ENCODE measurements at regions of chr3 and their contacts with region 1.

Region 1: DNA sequence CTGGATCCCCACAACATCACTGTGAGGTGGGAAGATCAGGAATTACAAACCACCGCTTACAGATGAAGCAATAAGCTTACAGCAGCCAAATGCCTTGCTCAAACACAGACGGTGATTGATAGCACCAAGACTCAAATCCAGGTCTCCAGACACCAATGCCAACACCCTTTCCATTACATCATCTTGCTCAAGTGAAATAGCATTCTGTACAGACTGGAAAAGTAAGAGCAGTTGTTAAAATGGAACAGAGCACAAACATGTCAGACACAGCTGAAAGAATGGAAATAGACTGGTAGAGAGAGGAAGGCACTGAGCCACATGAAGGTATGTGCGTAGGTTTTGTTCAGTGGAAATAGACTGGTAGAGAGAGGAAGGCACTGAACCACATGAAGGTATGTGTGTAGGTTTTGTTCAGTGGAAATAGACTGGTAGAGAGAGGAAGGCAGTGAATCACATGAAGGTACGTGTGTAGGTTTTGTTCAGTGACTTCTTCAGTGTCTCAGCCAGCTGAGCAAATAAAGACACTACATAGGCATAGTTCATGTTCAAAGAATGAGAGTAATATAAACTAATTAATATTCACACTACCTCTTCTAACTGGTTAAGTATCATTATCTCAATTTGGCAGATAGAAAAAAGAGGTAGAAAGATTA is 15.6 kb downstream of the CLDN1 start:
- DNase-seq: peak in 1 of 2 experiments; percentile 56
- H3K4me3 ChIP-seq: no peak overlapping the region
- H3K4me3 Mint-ChIP-seq: peak overlapping the region; percentile 45
- H3K27ac Mint-ChIP-seq: peak overlapping the region; percentile 79
- H3K4me1 ChIP-seq: peaks cover 62% of the 10 kb centered on the region
- H3K4me1 Mint-ChIP-seq: peaks cover 13% of the 10 kb centered on the region
- H3K27me3 ChIP-seq: no peaks in the 10 kb centered on the region
- H3K27me3 Mint-ChIP-seq: no peaks in the 10 kb centered on the region
- CTCF ChIP-seq: no peak

Region 2: GRCh38 chr3:190272706-190273105 is 33.9 kb before region 1 on chr3:
- CTCF ChIA-PET with region 1: no interaction called
- POLR2A ChIA-PET with region 1: no interaction called
- intact Hi-C with region 1: loop called (anchors 5 kb)
- DNase-seq: no peak
- H3K4me3 ChIP-seq: no peak overlapping the region
- H3K4me3 Mint-ChIP-seq: no peak overlapping the region
- H3K27ac Mint-ChIP-seq: no peak overlapping the region
- H3K4me1 ChIP-seq: 0 out of 2 replicates have a peak, but pooled peaks cover 3% of the 10 kb centered on the region
- H3K4me1 Mint-ChIP-seq: peaks cover 19% of the 10 kb centered on the region
- H3K27me3 ChIP-seq: no peaks in the 10 kb centered on the region
- H3K27me3 Mint-ChIP-seq: no peaks in the 10 kb centered on the region
- CTCF ChIP-seq: no peak

Region 3: GRCh38 chr3:190321789-190322603 is 15.4 kb after region 1 on chr3 and contains the start of gene CLDN1:
- CTCF ChIA-PET with region 1: interaction called, 27 read pairs
- POLR2A ChIA-PET with region 1: interaction called, 14 read pairs
- intact Hi-C with region 1: loop called (anchors 1 kb)
- DNase-seq: peak; percentile 83 to 92
- H3K4me3 ChIP-seq: peak within 1 kb of the TSS; percentile 66
- H3K4me3 Mint-ChIP-seq: peak within 1 kb of the TSS; percentile 81
- H3K27ac Mint-ChIP-seq: peak within 1 kb of the TSS; percentile 56
- H3K4me1 ChIP-seq: peaks cover 9% of the 10 kb centered on the region
- H3K4me1 Mint-ChIP-seq: peaks cover 29% of the 10 kb centered on the region
- H3K27me3 ChIP-seq: no peaks in the 10 kb centered on the region
- H3K27me3 Mint-ChIP-seq: no peaks in the 10 kb centered on the region
- CTCF ChIP-seq: peak; percentile 92 to 96
- total RNA-seq, gene CLDN1: 38.9 and 39.3 TPM in 2 replicates

Region 4: DNA sequence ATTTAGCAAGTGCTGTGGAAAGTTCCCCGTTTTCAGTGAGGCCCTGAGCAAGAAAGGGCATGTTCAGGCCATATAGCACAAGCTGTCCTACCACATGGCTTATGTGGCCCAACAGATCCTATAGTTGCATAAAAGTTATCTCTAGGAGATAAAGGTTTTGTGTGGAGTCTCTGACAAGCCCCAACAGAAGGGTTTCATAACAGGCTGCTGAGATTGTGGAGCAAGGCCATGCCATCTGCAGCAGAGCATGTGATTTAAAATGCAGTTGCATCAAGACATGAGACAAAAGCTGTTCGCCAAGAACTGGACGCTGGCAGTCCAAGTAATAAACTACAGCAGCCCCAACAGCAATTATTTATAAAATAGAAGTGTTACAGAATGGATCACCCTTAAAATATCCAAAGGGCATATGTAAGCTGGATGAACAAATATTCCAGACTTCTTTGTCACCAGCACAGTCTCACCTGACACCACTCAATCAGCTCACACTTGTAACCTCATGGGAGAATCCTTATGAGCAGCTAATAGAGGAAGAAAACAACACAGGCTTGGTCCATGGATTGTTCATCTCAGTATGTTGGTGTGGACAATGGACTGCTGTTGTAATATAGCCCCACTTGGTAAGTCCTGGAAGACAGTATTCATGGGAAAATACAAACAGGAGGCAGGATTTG is 30.0 kb after region 1 on chr3:
- CTCF ChIA-PET with region 1: no interaction called
- POLR2A ChIA-PET with region 1: no interaction called
- intact Hi-C with region 1: no loop called
- DNase-seq: no peak
- H3K4me3 ChIP-seq: no peak overlapping the region
- H3K4me3 Mint-ChIP-seq: no peak overlapping the region
- H3K27ac Mint-ChIP-seq: no peak overlapping the region
- H3K4me1 ChIP-seq: no peaks in the 10 kb centered on the region
- H3K4me1 Mint-ChIP-seq: no peaks in the 10 kb centered on the region
- H3K27me3 ChIP-seq: no peaks in the 10 kb centered on the region
- H3K27me3 Mint-ChIP-seq: no peaks in the 10 kb centered on the region
- CTCF ChIP-seq: no peak

Measured in Caco-2 (cell line).